ENCODE measurements at regions of chr3 and their contacts with region 1.

Region 1: DNA sequence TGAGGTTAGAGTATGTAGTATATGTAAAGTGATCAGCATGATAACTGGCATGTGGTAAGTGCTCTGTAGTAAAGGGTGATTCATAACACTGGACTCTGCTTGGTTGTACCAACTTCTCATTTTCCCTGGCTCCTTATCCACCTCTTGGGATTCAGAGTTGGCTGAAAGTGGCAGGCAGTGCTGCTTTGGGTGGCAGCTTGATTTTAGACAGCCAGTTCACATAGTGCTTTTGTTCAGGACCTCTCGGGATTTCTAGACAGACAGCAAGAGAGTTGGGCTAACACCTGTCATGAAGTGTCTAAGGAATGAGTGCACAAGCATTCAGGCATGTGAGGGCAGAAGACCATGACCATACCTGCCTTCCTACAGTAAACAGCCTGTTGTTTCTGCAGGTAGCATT is 69.0 kb downstream of the RBM6 start:
- DNase-seq: peak; percentile 2 to 21
- ATAC-seq: peak; percentile 95 to 99
- H3K4me3 ChIP-seq: no peak overlapping the region
- H3K27ac ChIP-seq: peak overlapping the region in 1 of 4 donors; percentile 23
- H3K4me1 ChIP-seq: peaks cover 0 to 4% of the 10 kb centered on the region in 2 donors
- H3K27me3 ChIP-seq: no peaks in the 10 kb centered on the region
- CTCF ChIP-seq: no peak
- POLR2A ChIP-seq: no peak

Region 2: DNA sequence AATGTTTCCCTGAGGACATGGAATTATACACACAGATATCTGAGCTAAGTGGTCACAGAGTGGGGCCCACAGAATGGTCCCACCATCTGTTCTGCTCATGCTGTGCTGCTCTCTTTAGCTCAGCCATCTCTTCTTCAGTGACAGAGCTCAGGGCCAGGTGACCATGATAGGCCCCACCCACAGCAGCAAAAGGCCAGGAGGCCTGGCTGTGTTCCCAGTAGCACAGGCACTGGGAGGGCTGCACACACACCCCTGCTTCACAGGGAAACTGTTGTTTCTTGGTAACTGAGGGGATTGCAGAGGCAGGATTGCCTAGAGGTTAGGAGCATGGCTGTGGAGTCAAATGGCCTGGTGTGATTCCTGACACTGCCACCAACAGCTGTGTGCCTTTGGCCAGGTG is 1641.7 kb before region 1 on chr3:
- in situ Hi-C with region 1: loop called in 1 of 4 experiments (anchors 25 kb)
- intact Hi-C with region 1: no loop called
- DNase-seq: no peak
- ATAC-seq: no peak
- H3K4me3 ChIP-seq: no peak overlapping the region
- H3K27ac ChIP-seq: no peak overlapping the region
- H3K4me1 ChIP-seq: no peaks in the 10 kb centered on the region
- H3K27me3 ChIP-seq: no peaks in the 10 kb centered on the region
- CTCF ChIP-seq: no peak
- POLR2A ChIP-seq: no peak

Region 3: DNA sequence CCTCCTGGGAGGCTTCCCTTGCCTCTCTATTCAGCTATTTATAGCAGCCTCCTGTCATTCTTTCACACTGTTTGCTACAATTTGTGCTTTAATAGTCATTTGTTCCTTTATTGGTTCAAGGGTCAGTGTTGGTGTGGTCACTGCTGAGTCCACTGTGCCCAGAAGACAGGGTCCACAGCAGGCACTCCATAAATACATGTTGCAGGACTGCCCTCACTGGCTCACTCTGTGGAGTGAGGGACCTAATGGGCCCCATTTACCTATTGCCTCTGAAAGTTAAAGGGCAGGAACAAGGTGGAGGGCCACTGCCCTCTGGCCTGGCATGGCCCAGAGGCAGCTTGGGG is 122.0 kb before region 1 on chr3:
- in situ Hi-C with region 1: no loop called
- intact Hi-C with region 1: no loop called
- DNase-seq: no peak
- ATAC-seq: no peak
- H3K4me3 ChIP-seq: no peak overlapping the region
- H3K27ac ChIP-seq: no peak overlapping the region
- H3K4me1 ChIP-seq: peaks cover 1 to 9% of the 10 kb centered on the region in 2 donors
- H3K27me3 ChIP-seq: no peaks in the 10 kb centered on the region
- CTCF ChIP-seq: no peak
- POLR2A ChIP-seq: no peak